Naive thymus-derived CD8-positive, alpha-beta T cell (primary cell): ENCODE measurements at regions of chr16 and their contacts with region 1.

Region 1: GRCh38 chr16:75647492-75648264 is at the starts of genes KARS1 and TERF2IP:
- DNase-seq: peak; percentile 89 to 96 (median 94)
- ATAC-seq: peak; percentile 85
- H3K4me3 Mint-ChIP-seq: peak within 1 kb of the TSS; percentile 93 to 100 (median 98)
- H3K27ac Mint-ChIP-seq: peak within 1 kb of the TSS; percentile 97 to 99 (median 99)
- H3K4me1 Mint-ChIP-seq: peaks cover 29 to 72% (median 65%) of the 10 kb centered on the region in 4 donors
- H3K27me3 Mint-ChIP-seq: peaks cover 0 to 1% (median 0%) of the 10 kb centered on the region in 5 donors
- polyA plus RNA-seq, gene KARS1: 194 to 214 (median 209) TPM
- polyA plus RNA-seq, gene TERF2IP: 96.4 to 137 (median 125) TPM

Region 2: GRCh38 chr16:75432828-75433731 is 214.6 kb before region 1 on chr16 and contains the start of gene CFDP1:
- POLR2A ChIA-PET with region 1: interaction called, 40 read pairs
- DNase-seq: peak; percentile 90 to 98 (median 96)
- ATAC-seq: peak; percentile 85 to 86
- H3K4me3 Mint-ChIP-seq: peak within 1 kb of the TSS; percentile 90 to 97 (median 94)
- H3K27ac Mint-ChIP-seq: peak within 1 kb of the TSS; percentile 94 to 99 (median 96)
- H3K4me1 Mint-ChIP-seq: peaks cover 20 to 53% (median 44%) of the 10 kb centered on the region in 4 donors
- H3K27me3 Mint-ChIP-seq: no peaks in the 10 kb centered on the region
- polyA plus RNA-seq, gene CFDP1: 34.3 to 36.8 (median 34.5) TPM

Region 3: GRCh38 chr16:75555707-75556430 is 91.8 kb before region 1 on chr16 and contains the start of gene TMEM231:
- POLR2A ChIA-PET with region 1: interaction called, 26 read pairs
- DNase-seq: peak; percentile 90 to 98 (median 95)
- ATAC-seq: peak; percentile 94
- H3K4me3 Mint-ChIP-seq: peak within 1 kb of the TSS; percentile 81 to 94 (median 90)
- H3K27ac Mint-ChIP-seq: peak within 1 kb of the TSS; percentile 87 to 95 (median 93)
- H3K4me1 Mint-ChIP-seq: peaks cover 4 to 13% (median 11%) of the 10 kb centered on the region in 4 donors
- H3K27me3 Mint-ChIP-seq: peaks cover 4 to 20% (median 6%) of the 10 kb centered on the region in 5 donors
- polyA plus RNA-seq, gene TMEM231: 0.95 to 1.4 (median 0.99) TPM

Region 4: GRCh38 chr16:75590920-75591843 is 56.5 kb before region 1 on chr16:
- POLR2A ChIA-PET with region 1: no interaction called
- DNase-seq: no peak
- ATAC-seq: no peak
- H3K4me3 Mint-ChIP-seq: no peak overlapping the region
- H3K27ac Mint-ChIP-seq: no peak overlapping the region
- H3K4me1 Mint-ChIP-seq: peaks cover 2 to 6% (median 4%) of the 10 kb centered on the region in 4 donors
- H3K27me3 Mint-ChIP-seq: no peaks in the 10 kb centered on the region

Region 5: DNA sequence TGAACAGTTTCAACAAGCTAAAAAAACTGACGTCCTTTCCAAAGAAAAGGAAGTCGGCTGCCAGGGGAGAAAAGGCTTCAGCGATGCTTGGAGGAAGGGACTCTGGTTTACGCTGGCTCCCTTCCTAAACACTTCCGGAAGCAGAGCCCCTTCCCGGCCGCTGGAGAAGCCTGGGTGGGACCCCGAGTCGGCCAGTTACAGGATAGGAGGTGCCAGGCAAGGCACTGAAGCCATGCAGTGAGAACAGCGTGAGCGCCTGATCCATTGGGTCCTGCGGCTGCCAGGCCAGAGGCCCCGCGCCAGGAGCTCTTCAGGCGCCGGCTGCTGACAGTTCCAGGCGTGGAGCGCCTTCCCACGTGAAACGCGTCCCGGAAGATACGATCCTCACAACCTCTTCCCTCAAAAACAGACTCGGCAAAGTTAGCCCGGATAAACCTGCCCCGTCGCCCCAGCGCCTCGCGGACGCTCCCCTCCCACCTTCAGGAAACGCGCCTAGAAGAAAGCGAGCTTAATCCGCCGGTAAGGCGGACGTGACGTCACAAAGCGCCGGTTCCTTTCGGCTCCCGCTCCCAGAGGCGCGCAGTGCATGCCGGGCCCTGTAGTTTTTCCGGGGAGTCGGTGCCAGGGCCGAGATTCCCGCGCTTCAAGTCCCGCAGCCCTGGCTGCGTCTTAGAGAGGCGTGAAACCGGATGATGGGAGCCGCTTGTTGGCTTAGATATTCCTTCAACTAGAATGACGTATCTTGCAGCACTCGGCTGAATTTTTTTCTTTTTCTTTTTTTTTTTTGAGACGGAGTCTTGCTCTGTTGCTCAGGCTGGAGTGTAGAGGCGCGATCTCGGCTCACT is 24.7 kb before region 1 on chr16 and contains the start of gene ADAT1:
- POLR2A ChIA-PET with region 1: interaction called, 119 read pairs
- DNase-seq: peak; percentile 91 to 99 (median 98)
- ATAC-seq: peak; percentile 92 to 95
- H3K4me3 Mint-ChIP-seq: peak within 1 kb of the TSS; percentile 93 to 99 (median 96)
- H3K27ac Mint-ChIP-seq: peak within 1 kb of the TSS; percentile 91 to 99 (median 98)
- H3K4me1 Mint-ChIP-seq: peaks cover 30 to 60% (median 52%) of the 10 kb centered on the region in 4 donors
- H3K27me3 Mint-ChIP-seq: no peaks in the 10 kb centered on the region
- polyA plus RNA-seq, gene ADAT1: 35.0 to 41.5 (median 39.8) TPM

Region 6: DNA sequence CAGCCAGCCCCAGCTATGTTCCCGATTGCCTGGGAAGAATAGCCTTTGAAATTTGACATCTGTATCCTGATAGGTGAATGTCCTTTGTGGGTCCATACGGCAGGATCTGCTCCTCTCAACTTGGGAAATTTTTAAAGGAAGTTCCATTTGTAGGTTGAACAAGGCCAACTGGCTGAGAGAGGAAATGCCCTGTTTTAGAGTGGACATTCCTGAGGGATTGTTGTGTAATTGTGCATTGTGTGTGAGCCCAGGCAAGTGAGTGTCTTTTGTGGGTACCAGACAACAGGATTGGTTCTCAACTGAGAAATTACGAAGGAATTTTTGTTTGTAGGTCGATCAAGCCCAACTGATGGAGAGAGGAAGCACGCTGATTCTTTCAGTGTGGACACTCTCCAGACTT is 31.7 kb after region 1 on chr16:
- POLR2A ChIA-PET with region 1: no interaction called
- DNase-seq: no peak
- ATAC-seq: no peak
- H3K4me3 Mint-ChIP-seq: no peak overlapping the region
- H3K27ac Mint-ChIP-seq: no peak overlapping the region
- H3K4me1 Mint-ChIP-seq: no peaks in the 10 kb centered on the region
- H3K27me3 Mint-ChIP-seq: peaks cover 0 to 7% (median 0%) of the 10 kb centered on the region in 5 donors

Region 7: DNA sequence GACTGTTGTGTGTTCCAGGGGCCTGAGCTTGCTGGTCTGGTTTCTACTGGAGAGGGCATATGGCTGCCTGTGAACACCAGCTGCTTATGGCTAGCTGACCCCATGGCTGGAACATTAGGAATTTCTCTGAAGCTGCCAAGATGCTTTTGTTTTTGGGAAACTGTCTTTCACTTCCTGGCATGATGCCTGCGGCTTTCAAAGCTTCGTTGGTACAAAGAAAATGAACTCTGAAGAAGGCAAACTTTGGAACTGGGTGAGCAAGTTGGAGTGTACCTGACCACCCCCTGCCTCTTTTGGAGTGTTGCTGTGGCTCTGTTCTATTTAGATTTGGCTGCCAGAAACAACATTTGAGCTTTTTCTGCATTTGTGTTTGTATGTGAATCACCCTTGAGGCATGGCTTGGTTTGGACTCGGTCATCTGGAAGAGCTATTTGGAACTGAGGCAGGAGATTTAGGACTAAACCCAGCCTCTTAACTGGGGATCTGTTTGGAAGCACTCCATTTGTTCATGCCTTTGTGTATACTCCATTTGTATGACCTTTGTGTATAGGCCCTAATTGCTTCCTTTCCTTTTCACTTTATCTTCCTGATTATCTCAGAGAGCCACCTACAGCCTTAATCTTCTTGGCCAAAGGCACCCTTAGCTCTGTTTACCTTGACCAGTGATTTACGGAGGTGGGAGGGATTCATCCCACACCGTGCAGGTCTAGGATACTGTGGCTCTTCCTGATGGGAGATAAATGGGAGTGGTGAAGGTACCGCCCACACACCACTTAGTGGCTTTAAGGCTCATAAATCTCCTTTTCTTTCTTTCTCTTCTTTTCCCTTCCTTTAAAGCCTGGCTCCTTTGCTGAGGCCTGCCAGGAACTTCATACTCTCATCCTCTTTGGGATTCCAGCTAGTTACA is 85.9 kb after region 1 on chr16:
- POLR2A ChIA-PET with region 1: no interaction called
- DNase-seq: no peak
- ATAC-seq: no peak
- H3K4me3 Mint-ChIP-seq: no peak overlapping the region
- H3K27ac Mint-ChIP-seq: peak overlapping the region in 3 of 10 donors; percentile 1 to 40 (median 14)
- H3K4me1 Mint-ChIP-seq: no peaks in the 10 kb centered on the region
- H3K27me3 Mint-ChIP-seq: peaks cover 0 to 6% (median 3%) of the 10 kb centered on the region in 5 donors

Region 8: GRCh38 chr16:75774197-75774596 is 126.5 kb after region 1 on chr16:
- POLR2A ChIA-PET with region 1: no interaction called
- DNase-seq: no peak
- ATAC-seq: no peak
- H3K4me3 Mint-ChIP-seq: no peak overlapping the region
- H3K27ac Mint-ChIP-seq: no peak overlapping the region
- H3K4me1 Mint-ChIP-seq: no peaks in the 10 kb centered on the region
- H3K27me3 Mint-ChIP-seq: peaks cover 13 to 53% (median 30%) of the 10 kb centered on the region in 5 donors

Region 9: DNA sequence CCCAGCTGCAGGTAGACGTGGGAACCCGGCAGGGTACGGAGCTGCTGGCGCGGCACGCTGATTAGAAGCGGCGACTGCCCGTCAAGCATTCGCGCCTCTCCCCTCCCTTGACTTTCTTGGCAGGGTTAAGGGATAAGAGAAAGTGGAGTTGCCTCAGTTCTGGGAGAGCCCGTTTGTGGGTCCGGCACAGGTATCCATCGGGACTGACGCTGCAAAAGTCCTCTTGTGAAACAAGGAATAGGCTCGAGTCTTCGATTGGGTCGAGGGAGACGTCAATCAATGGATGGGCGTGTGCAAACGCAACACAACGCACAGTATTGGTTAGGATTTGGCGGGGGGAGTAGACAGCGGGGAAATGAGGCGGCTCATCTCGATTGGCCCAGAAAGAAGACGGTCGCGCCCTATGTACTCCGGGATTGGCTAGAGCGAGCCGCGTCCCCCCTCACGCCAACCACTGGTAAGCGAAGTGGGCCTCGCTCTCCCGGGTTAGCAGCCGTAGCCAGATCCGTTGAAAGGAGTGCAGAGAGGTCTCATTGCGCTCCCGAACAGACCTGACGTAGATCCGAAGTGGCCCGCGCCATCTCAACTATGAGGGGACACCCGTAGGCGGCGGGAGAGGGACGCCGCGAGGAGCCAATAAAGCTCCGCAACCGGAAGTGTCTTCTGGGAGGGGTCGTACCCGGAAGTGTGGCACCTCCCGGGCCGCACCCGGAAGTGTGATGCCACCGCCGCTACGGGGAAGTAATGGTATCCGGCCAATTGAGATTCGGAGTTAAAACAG is 1543.0 kb after region 1 on chr16 and contains the start of gene MON1B:
- POLR2A ChIA-PET with region 1: interaction called, 10 read pairs
- DNase-seq: peak; percentile 84 to 98 (median 96)
- ATAC-seq: peak; percentile 91 to 95
- H3K4me3 Mint-ChIP-seq: peak within 1 kb of the TSS; percentile 94 to 99 (median 98)
- H3K27ac Mint-ChIP-seq: peak within 1 kb of the TSS; percentile 99 to 100 (median 99)
- H3K4me1 Mint-ChIP-seq: peaks cover 37 to 55% (median 48%) of the 10 kb centered on the region in 4 donors
- H3K27me3 Mint-ChIP-seq: peaks cover 0 to 5% (median 0%) of the 10 kb centered on the region in 5 donors
- polyA plus RNA-seq, gene MON1B: 29.0 to 40.7 (median 33.0) TPM